ENCODE measurements at regions of chr4 and their contacts with region 1.

Region 1: DNA sequence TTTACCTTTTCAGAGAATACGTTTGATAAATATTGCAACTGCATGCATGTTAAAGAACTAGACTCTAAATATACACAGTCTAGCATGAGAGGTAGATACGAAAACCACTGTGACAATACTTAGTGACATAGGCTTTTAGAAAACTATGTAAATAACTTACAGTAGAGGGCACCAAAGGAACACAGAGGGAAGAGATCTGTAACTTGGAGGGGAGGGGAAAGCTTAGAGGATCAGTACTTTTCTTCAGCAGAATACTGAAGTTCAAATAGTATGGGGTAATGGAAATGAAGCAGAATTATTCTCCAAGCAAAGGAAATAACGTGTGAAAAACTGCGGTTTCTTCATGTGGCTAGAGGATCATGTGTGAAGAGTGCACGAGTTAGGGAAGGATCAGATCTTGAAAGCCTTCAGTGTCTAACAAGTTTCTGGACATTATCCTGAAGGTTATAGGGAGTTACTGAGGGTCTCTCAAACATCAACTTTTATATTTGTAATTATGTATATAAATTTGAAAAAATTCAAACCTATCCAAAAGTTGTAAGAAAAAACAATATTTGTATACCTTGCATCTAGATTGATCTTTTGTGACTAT is 264.3 kb downstream of the NPFFR2 start:
- DNase-seq: no peak

Region 2: DNA sequence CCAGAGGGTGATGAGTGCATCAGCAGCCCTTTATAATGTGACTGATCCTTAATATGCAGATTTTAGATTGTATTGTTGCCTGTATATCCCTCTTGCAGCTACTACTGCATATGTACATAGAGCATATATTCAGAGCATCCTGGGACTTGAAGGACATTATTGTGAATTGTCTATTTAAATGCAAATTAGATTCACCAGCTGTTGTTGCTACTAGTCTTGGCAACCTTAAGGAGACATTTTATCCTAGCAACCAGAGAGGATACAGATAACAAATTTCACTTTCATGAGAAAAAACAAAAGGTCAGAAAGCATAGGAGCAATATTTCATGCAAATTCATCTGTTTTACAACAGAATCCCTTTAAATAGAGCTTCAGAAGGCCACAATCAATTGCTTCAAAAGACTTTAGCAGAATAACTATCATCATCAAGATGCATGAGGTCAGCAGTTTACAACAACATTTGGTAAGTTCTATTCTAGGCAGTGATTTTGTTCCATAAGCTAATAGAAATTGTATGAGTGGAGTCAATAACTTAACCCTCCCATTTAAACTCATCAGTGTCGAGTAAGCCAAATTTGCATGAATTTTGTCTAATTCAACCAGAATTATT is 660.8 kb before region 1 on chr4:
- intact Hi-C with region 1: no loop called
- DNase-seq: no peak

Region 3: DNA sequence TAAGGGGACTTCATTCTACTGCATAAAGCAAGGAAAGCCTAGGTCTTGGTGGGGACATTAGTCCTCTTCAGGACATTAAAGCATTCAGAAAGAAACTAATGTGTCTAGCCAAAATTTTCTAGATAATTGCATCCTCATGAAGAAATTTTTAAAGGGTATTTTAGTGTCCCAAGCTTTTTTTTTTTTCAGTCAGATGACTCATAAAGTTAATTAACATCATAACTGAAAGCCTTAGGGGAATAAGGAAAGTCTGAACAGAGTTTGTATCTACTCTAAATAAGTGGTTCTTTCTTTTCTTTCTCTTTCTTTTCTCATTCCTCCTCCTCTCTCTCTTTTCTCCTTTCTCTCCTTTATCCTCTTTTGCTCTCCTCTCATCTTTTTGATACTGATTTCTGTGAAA is 70.5 kb after region 1 on chr4:
- intact Hi-C with region 1: no loop called
- DNase-seq: no peak

Region 4: DNA sequence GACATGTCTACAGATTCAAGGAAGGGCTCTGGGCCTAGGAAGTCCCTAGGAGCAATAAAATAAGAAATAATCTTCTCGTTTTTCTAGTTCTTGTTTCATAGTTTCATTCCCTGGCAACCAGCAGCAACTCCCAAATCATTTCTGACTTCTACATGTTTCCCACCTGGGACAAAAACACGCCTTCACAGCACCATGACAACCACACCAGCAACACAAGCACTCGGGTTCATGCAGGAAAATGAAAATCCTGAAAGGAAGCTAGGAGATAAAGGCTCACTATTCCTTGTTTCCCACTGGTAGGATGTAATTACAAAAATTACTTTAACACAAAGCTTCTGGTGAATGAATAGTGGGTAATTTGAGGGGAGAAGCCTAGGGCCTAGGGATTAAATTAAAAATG is 114.1 kb after region 1 on chr4:
- intact Hi-C with region 1: no loop called
- DNase-seq: no peak

Region 5: DNA sequence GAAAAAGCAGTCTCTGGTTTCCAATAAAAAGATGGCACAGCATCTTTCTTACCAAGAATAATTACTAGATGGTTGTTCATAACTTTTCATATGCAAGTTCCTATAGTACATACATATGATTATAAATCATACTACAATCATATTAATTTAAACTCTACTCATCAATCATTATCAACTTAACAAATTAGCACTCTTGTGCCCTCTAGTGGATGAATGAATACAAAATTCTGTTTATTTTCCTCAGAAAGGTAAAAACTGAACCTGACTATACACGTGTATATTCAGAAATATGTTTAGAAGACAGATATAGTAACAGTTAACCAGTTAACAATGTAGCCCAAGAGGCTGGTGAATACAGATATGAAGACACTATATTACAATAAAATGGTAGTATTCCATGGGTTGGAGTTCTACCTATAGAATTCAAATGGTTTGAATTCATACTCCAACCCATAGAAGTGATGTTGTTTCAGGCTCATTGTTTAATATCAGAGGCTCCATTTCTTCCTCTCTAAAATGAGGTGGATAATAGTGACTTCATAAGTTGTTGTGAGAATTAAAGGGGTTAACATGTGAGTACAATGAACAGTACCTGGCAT is 172.9 kb after region 1 on chr4:
- intact Hi-C with region 1: loop called (anchors 10 kb)
- DNase-seq: no peak

Region 6: GRCh38 chr4:72536443-72536842 is 240.4 kb after region 1 on chr4:
- intact Hi-C with region 1: no loop called
- DNase-seq: no peak

Region 7: GRCh38 chr4:73019462-73020047 is 723.5 kb after region 1 on chr4:
- intact Hi-C with region 1: loop called (anchors 10 kb)
- DNase-seq: no peak

Measured in cardiac septum (tissue), 1 donor.